ENCODE measurements at regions of chr3 and their contacts with region 1.

Region 1: DNA sequence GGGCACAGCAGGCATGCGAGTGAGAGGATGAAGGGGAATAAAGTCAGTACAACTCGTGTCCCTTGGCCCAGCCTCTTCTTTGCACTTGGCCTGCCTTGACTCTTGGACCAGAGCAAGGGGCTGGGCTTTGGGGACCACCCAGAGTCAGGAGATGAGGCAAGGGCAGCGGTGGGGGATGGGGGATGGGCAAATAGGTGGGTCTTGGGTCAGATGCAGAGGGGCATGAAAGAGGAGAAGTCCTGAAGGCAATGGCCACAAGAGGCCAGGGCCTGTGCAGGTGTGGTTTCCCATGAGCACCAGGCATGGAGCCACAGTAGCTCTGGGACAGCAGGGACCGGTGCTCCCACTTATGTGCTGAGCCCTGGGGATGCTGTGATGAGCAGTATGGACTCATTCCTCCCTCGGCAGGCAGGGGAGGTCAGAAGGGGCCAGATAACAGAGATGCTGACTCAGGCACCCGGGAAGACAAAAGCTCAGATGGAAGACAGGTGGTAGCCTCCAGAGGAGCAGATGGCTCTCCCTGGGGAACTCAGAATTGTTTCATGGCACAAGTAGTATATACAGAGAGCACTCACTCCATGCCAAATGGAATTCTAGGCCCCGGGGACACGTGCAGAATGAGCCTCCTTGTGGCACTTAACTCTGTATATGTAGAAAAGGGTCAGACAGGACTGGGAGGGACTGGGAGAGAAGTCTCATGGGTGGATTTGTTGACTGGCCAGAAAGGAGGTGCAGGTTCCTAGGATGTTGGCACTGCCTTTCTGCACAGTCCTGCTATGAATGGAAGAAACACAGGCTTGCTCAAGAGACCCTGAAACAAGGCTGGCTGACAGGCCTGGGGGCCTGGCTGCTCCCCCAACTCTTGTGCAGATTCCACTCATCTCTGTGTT is 14.3 kb downstream of the ZBTB47 start:
- DNase-seq: no peak
- H3K4me3 Mint-ChIP-seq: no peak overlapping the region
- H3K27ac Mint-ChIP-seq: no peak overlapping the region
- H3K4me1 Mint-ChIP-seq: no peaks in the 10 kb centered on the region
- H3K27me3 Mint-ChIP-seq: no peaks in the 10 kb centered on the region
- CTCF ChIP-seq: no peak

Region 2: GRCh38 chr3:42376344-42376798 is 291.4 kb before region 1 on chr3:
- CTCF ChIA-PET with region 1: no interaction called
- POLR2A ChIA-PET with region 1: no interaction called
- intact Hi-C with region 1: no loop called
- DNase-seq: peak; percentile 95
- H3K4me3 Mint-ChIP-seq: no peak overlapping the region
- H3K27ac Mint-ChIP-seq: peak overlapping the region; percentile 51
- H3K4me1 Mint-ChIP-seq: peaks cover 19% of the 10 kb centered on the region
- H3K27me3 Mint-ChIP-seq: no peaks in the 10 kb centered on the region
- CTCF ChIP-seq: no peak

Region 3: GRCh38 chr3:42683875-42684598 is 16.3 kb after region 1 on chr3:
- CTCF ChIA-PET with region 1: interaction called, 3 read pairs
- POLR2A ChIA-PET with region 1: interaction called, 13 read pairs
- intact Hi-C with region 1: no loop called
- DNase-seq: peak; percentile 97
- H3K4me3 Mint-ChIP-seq: no peak overlapping the region
- H3K27ac Mint-ChIP-seq: peak overlapping the region; percentile 82
- H3K4me1 Mint-ChIP-seq: peaks cover 19% of the 10 kb centered on the region
- H3K27me3 Mint-ChIP-seq: peaks cover 1% of the 10 kb centered on the region
- CTCF ChIP-seq: no peak